HepG2 (cell line): ENCODE measurements at regions of chr3 and their contacts with region 1.

Region 1: GRCh38 chr3:48918388-48919214 is at the start of gene ARIH2:
- DNase-seq: peak; percentile 87
- ATAC-seq: peak; percentile 92
- H3K4me3 ChIP-seq: peak within 1 kb of the TSS; percentile 73 to 89 (median 88)
- H3K27ac ChIP-seq: peak within 1 kb of the TSS; percentile 95
- H3K4me1 ChIP-seq: peaks cover 25% of the 10 kb centered on the region
- H3K27me3 ChIP-seq: no peaks in the 10 kb centered on the region; a peak in 1 of 5 replicates
- CTCF ChIP-seq: peak; percentile 67
- EP300 ChIP-seq: no peak; a peak in 1 of 4 replicates
- POLR2A ChIP-seq: peak; percentile 84 to 93
- RAD21 ChIP-seq: no peak; the same call in 1 of the 2 replicates
- total RNA-seq, gene ARIH2: 83.3 and 86.9 TPM in 2 replicates

Region 2: DNA sequence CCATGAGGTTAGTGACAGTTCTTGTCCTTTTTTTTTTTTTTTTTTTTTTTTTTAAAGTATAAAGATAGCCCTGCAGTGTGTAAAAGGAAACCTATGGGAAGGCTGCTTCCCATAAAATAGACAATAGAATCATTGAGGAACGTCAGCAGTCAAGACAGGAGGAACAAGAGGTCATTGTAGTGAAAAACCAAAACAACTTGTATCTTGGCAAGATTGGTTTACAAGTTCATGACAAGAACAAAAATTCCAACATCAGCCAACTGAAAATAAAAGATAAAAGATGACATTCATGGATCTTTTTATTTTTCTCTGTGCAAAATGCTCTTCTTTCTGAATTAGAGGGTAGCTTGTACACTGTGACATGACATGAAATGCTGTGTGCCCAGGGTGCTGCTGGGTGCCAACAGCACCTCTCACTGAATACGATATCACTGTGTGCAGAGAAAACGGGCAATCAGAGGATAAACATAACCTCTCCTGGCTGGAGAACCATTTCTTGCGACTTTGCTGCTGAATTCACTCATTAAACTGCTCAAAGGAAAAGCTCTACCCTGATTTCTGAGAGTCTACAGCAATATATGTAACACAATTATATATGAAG is 171.5 kb before region 1 on chr3:
- CTCF ChIA-PET with region 1: no interaction called
- POLR2A ChIA-PET with region 1: interaction called, 3 read pairs
- in situ Hi-C with region 1: no loop called
- intact Hi-C with region 1: loop called (anchors 5 kb)
- DNase-seq: peak; percentile 29
- ATAC-seq: no peak
- H3K4me3 ChIP-seq: no peak overlapping the region
- H3K27ac ChIP-seq: no peak overlapping the region
- H3K4me1 ChIP-seq: peaks cover 17% of the 10 kb centered on the region
- H3K27me3 ChIP-seq: no peaks in the 10 kb centered on the region
- CTCF ChIP-seq: no peak
- EP300 ChIP-seq: no peak
- POLR2A ChIP-seq: no peak
- RAD21 ChIP-seq: no peak

Region 3: DNA sequence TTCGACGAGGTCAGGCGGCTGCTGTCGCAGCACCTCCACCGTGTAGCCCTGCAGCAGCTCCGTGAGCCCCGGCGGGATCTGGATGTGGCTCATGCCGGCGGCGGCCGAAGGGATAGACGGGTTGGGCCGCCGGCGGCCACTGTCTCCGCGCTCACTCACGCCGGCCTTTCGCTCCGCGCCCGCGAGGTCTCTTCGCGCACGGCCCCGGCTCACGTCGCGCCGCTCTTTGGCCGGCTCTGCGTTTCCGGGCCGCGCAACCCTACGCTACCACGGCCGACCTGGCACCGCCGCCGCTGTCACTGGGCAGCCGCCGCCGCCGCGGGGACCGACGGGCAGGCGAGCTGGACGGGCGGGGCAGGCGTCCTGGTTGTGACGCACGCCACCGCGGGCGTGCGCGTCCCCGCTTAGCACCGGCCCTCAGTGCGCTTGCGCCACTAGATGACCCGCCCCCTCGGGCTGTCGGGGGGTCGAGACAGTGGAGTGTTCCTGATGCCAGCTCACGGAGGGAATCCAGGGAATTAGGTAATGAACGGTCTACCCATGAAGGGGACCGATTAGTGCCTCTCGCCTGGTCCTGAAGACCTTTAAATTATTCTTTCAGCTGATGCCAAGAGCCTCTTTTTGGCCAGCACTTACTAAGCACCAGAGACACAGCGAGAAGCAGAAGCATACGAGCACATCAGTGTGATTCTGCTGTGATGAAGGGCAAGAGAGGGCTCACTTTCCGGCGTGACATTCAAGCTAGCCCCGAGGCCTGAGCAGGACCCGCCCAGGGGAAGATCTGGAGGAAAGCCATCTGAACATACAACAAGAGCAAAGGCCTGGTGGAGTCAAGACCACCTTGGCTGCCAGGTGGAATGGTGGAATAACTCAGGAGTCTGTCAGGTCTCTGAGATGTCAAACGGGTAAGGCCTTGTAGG is 70.8 kb before region 1 on chr3 and contains the start of gene PRKAR2A:
- CTCF ChIA-PET with region 1: no interaction called
- POLR2A ChIA-PET with region 1: interaction called, 15 read pairs
- in situ Hi-C with region 1: no loop called
- intact Hi-C with region 1: loop called (anchors 5 kb)
- DNase-seq: peak; percentile 73
- ATAC-seq: peak; percentile 92
- H3K4me3 ChIP-seq: peak within 1 kb of the TSS; percentile 67 to 89 (median 78)
- H3K27ac ChIP-seq: peak within 1 kb of the TSS; percentile 88
- H3K4me1 ChIP-seq: peaks cover 26% of the 10 kb centered on the region
- H3K27me3 ChIP-seq: no peaks in the 10 kb centered on the region
- CTCF ChIP-seq: no peak; the same call in 1 of the 2 replicates
- EP300 ChIP-seq: no peak
- POLR2A ChIP-seq: peak; percentile 58 to 89; a peak in 3 of 4 replicates
- RAD21 ChIP-seq: peak; percentile 31
- total RNA-seq, gene PRKAR2A: 29.2 and 38.5 TPM in 2 replicates

Region 4: GRCh38 chr3:48855681-48856447 is 62.7 kb before region 1 on chr3:
- CTCF ChIA-PET with region 1: no interaction called
- POLR2A ChIA-PET with region 1: interaction called, 3 read pairs
- in situ Hi-C with region 1: no loop called
- intact Hi-C with region 1: loop called (anchors 2 kb)
- DNase-seq: peak; percentile 87
- ATAC-seq: peak; percentile 98
- H3K4me3 ChIP-seq: no peak overlapping the region
- H3K27ac ChIP-seq: peak overlapping the region; percentile 57
- H3K4me1 ChIP-seq: peaks cover 18% of the 10 kb centered on the region
- H3K27me3 ChIP-seq: no peaks in the 10 kb centered on the region
- CTCF ChIP-seq: peak; percentile 69
- EP300 ChIP-seq: 0 out of 4 replicates have a peak, but pooled peaks of 1 of the 2 experiments have one; percentile 25
- POLR2A ChIP-seq: no peak
- RAD21 ChIP-seq: peak; percentile 70

Region 5: GRCh38 chr3:48898383-48899234 is 20.0 kb before region 1 on chr3 and contains the start of gene SLC25A20:
- CTCF ChIA-PET with region 1: interaction called, 3 read pairs
- POLR2A ChIA-PET with region 1: interaction called, 39 read pairs
- in situ Hi-C with region 1: no loop called
- intact Hi-C with region 1: no loop called
- DNase-seq: peak; percentile 80
- ATAC-seq: peak; percentile 83
- H3K4me3 ChIP-seq: peak within 1 kb of the TSS; percentile 71 to 94 (median 84)
- H3K27ac ChIP-seq: peak within 1 kb of the TSS; percentile 78
- H3K4me1 ChIP-seq: peaks cover 42% of the 10 kb centered on the region
- H3K27me3 ChIP-seq: no peaks in the 10 kb centered on the region
- CTCF ChIP-seq: no peak; the same call in 1 of the 2 replicates
- EP300 ChIP-seq: no peak
- POLR2A ChIP-seq: no peak
- RAD21 ChIP-seq: peak; percentile 37; the same call in 1 of the 2 replicates
- total RNA-seq, gene SLC25A20: 25.4 and 26.6 TPM in 2 replicates